Activated CD4-positive, alpha-beta T cell treated with anti-CD3 and anti-CD28 coated beads, Interleukin-2, amount 10 ng/mL, durations not matched to agents 24 days and 14 days (primary cell): ENCODE measurements at regions of chr7 and their contacts with region 1.

Region 1: GRCh38 chr7:100586266-100587025 is at the start of gene FBXO24:
- DNase-seq: peak; percentile 100
- H3K4me3 Mint-ChIP-seq: peak within 1 kb of the TSS; percentile 91
- H3K27ac Mint-ChIP-seq: peak within 1 kb of the TSS; percentile 96
- H3K4me1 Mint-ChIP-seq: peaks cover 30% of the 10 kb centered on the region
- H3K27me3 Mint-ChIP-seq: peaks cover 6% of the 10 kb centered on the region
- total RNA-seq, gene FBXO24: 0.38 and 0.42 TPM in 2 replicates

Region 2: GRCh38 chr7:100435401-100436304 is 150.8 kb before region 1 on chr7:
- intact Hi-C with region 1: loop called (anchors 1 kb)
- DNase-seq: peak; percentile 85
- H3K4me3 Mint-ChIP-seq: peak overlapping the region; percentile 90
- H3K27ac Mint-ChIP-seq: peak overlapping the region; percentile 89
- H3K4me1 Mint-ChIP-seq: peaks cover 41% of the 10 kb centered on the region
- H3K27me3 Mint-ChIP-seq: no peaks in the 10 kb centered on the region

Region 3: GRCh38 chr7:100545360-100546128 is 40.9 kb before region 1 on chr7:
- intact Hi-C with region 1: loop called (anchors 1 kb)
- DNase-seq: peak; percentile 79
- H3K4me3 Mint-ChIP-seq: peak overlapping the region; percentile 99
- H3K27ac Mint-ChIP-seq: peak overlapping the region; percentile 99
- H3K4me1 Mint-ChIP-seq: peaks cover 83% of the 10 kb centered on the region
- H3K27me3 Mint-ChIP-seq: no peaks in the 10 kb centered on the region

Region 4: GRCh38 chr7:100611974-100612729 is 25.7 kb after region 1 on chr7 and contains the start of gene MOSPD3:
- intact Hi-C with region 1: loop called (anchors 1 kb)
- DNase-seq: peak; percentile 100
- H3K4me3 Mint-ChIP-seq: peak within 1 kb of the TSS; percentile 97
- H3K27ac Mint-ChIP-seq: peak within 1 kb of the TSS; percentile 100
- H3K4me1 Mint-ChIP-seq: peaks cover 18% of the 10 kb centered on the region
- H3K27me3 Mint-ChIP-seq: peaks cover 9% of the 10 kb centered on the region
- total RNA-seq, gene MOSPD3: 11.3 and 12.1 TPM in 2 replicates

Region 5: GRCh38 chr7:100691676-100692577 is 105.5 kb after region 1 on chr7:
- intact Hi-C with region 1: loop called (anchors 5 kb)
- DNase-seq: peak; percentile 95
- H3K4me3 Mint-ChIP-seq: peak overlapping the region; percentile 95
- H3K27ac Mint-ChIP-seq: peak overlapping the region; percentile 57
- H3K4me1 Mint-ChIP-seq: peaks cover 28% of the 10 kb centered on the region
- H3K27me3 Mint-ChIP-seq: peaks cover 9% of the 10 kb centered on the region